Heart left ventricle (tissue), 16 donors: ENCODE measurements at regions of chrX and their contacts with region 1.

Region 1: GRCh38 chrX:10189317-10190268 is 32.8 kb downstream of the CLCN4 start:
- DNase-seq: peak; percentile 52 to 72 (median 66)
- ATAC-seq: peak; percentile 73 to 92 (median 88)
- H3K4me3 ChIP-seq: no peak overlapping the region
- H3K27ac ChIP-seq: no peak overlapping the region
- H3K4me1 ChIP-seq: peaks cover 0 to 12% (median 0%) of the 10 kb centered on the region in 12 donors
- H3K27me3 ChIP-seq: peaks cover 0 to 7% (median 0%) of the 10 kb centered on the region in 9 donors
- CTCF ChIP-seq: peak; percentile 54 to 86 (median 70)
- POLR2A ChIP-seq: no peak

Region 2: GRCh38 chrX:10119399-10119990 is 70.1 kb before region 1 on chrX:
- intact Hi-C with region 1: no loop called
- DNase-seq: peak in 4 of 5 donors; percentile 53 to 75 (median 64)
- ATAC-seq: peak; percentile 44 to 80 (median 66)
- H3K4me3 ChIP-seq: no peak overlapping the region
- H3K27ac ChIP-seq: peak overlapping the region in 4 of 12 donors; percentile 0 to 45 (median 8)
- H3K4me1 ChIP-seq: peaks cover 0 to 32% (median 7%) of the 10 kb centered on the region in 12 donors
- H3K27me3 ChIP-seq: no peaks in the 10 kb centered on the region
- CTCF ChIP-seq: peak; percentile 97 to 100 (median 100)
- POLR2A ChIP-seq: no peak

Region 3: GRCh38 chrX:10615931-10616775 is 426.6 kb after region 1 on chrX:
- intact Hi-C with region 1: loop called in 9 of 10 experiments (anchors 5 kb)
- DNase-seq: peak in 3 of 5 donors; percentile 30 to 35 (median 31)
- ATAC-seq: peak in 3 of 4 donors; percentile 47 to 60 (median 52)
- H3K4me3 ChIP-seq: peak overlapping the region in 6 of 12 donors; percentile 7 to 86 (median 52)
- H3K27ac ChIP-seq: peak overlapping the region in 3 of 12 donors; percentile 10 to 77 (median 19)
- H3K4me1 ChIP-seq: peaks cover 0 to 5% (median 0%) of the 10 kb centered on the region in 12 donors
- H3K27me3 ChIP-seq: peaks cover 0 to 27% (median 0%) of the 10 kb centered on the region in 9 donors
- CTCF ChIP-seq: peak; percentile 41 to 69 (median 63)
- POLR2A ChIP-seq: no peak

Region 4: GRCh38 chrX:10636337-10636736 is 446.7 kb after region 1 on chrX:
- intact Hi-C with region 1: loop called in 7 of 10 experiments (anchors 1 to 5 kb)
- DNase-seq: peak in 4 of 5 donors; percentile 15 to 32 (median 26)
- ATAC-seq: peak in 3 of 4 donors; percentile 67 to 75 (median 73)
- H3K4me3 ChIP-seq: peak overlapping the region in 4 of 12 donors; percentile 3 to 26 (median 14)
- H3K27ac ChIP-seq: peak overlapping the region in 3 of 12 donors; percentile 40 to 58 (median 57)
- H3K4me1 ChIP-seq: peaks cover 0 to 12% (median 0%) of the 10 kb centered on the region in 12 donors
- H3K27me3 ChIP-seq: no peaks in the 10 kb centered on the region
- CTCF ChIP-seq: peak in 11 of 12 donors; percentile 23 to 64 (median 57)
- POLR2A ChIP-seq: no peak

Region 5: DNA sequence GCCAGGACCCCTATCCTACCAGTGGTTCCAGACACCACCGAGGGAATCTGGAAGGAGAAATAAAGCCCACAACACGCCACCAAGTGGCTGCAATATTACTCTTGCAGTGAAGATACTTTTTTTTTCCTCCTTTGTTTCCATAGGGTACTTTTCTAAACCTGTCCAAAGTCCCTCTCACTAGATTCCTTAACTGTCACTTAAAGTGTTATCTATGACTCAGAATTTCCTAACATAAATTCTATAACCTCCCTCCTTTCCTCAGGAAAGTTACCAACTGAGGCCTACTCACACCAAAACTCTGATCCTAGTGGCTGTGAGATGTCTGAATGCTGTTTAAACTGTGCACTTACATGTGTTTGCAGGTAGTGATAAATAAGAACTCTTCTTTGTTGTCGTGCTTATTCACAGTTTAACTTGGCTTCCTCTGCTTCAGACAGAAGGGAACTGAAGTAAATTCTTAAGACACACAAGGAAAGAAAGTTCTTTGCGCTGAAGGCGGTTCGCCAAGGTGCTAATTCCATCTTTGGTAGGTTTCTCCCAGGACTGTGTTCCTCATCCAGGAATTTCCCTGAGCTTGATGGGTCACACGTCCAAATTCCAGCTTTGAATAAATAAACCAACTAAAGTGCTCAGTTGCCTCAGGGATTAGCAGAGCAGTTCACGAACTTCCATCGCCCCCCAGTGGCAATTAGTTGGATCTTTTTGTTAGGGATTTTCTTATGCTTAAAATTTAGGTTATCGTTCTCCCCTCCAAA is 910.9 kb after region 1 on chrX:
- intact Hi-C with region 1: loop called in 3 of 10 experiments (anchors 10 kb)
- DNase-seq: peak in 2 of 5 donors; percentile 8 to 16
- ATAC-seq: peak in 2 of 4 donors; percentile 31 to 39
- H3K4me3 ChIP-seq: no peak overlapping the region
- H3K27ac ChIP-seq: peak overlapping the region in 1 of 12 donors; percentile 52
- H3K4me1 ChIP-seq: peaks cover 0 to 3% (median 0%) of the 10 kb centered on the region in 12 donors
- H3K27me3 ChIP-seq: peaks cover 0 to 3% (median 0%) of the 10 kb centered on the region in 9 donors
- CTCF ChIP-seq: peak; percentile 10 to 52 (median 36)
- POLR2A ChIP-seq: no peak